Ascending aorta (tissue), 2 donors: ENCODE measurements at regions of chr1 and their contacts with region 1.

Region 1: DNA sequence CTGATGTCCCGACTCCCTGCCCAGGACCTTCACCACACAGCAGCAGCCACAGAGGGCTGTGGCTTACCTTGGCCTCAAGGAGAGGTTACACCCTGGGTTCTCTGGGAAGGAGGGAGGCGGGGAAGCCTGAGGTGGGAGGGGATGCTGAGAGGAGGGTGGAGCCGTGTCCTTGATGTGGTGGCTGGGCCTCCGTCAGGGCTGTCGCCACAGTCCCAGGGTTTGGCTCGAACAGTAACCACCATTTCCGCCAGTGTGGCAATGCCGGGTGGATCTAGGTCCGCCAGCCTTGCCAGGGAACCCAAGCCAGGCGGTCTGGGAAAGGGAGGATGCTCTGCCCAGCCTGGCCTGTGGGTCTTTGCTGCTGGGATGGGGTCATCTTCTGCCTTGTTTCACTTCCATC is 18.4 kb upstream of the CDCA8 start:
- DNase-seq: no peak
- H3K4me3 ChIP-seq: no peak overlapping the region
- H3K27ac ChIP-seq: no peak overlapping the region
- H3K4me1 ChIP-seq: no peaks in the 10 kb centered on the region
- H3K27me3 ChIP-seq: no peaks in the 10 kb centered on the region
- CTCF ChIP-seq: no peak

Region 2: DNA sequence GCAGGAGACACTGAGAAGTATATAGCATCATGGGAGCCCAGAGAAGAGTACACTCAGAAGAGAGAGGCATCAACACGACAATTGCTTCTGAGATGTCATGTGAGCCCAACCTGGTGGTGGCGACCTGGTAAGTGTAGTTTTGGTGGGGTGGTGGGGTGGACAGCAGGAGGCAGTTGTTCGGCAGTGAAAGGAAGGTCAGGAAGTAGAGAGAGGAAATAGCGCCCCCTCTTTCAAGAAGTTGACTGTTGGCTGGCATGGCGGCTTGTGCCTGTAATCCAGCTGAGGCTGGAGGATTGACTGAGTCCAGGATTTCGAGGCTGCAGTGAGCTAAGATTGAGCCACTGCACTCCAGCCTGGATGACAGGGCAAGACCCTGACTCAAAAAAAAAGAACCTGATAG is 51.8 kb before region 1 on chr1:
- intact Hi-C with region 1: no loop called
- DNase-seq: no peak
- H3K4me3 ChIP-seq: no peak overlapping the region
- H3K27ac ChIP-seq: no peak overlapping the region
- H3K4me1 ChIP-seq: no peaks in the 10 kb centered on the region
- H3K27me3 ChIP-seq: no peaks in the 10 kb centered on the region
- CTCF ChIP-seq: no peak

Region 3: GRCh38 chr1:37634244-37634991 is 39.5 kb before region 1 on chr1 and contains the start of gene RSPO1:
- intact Hi-C with region 1: loop called (anchors 5 kb)
- DNase-seq: no peak
- H3K4me3 ChIP-seq: peak within 1 kb of the TSS in 1 of 2 donors; percentile 52
- H3K27ac ChIP-seq: no peak within 1 kb of the TSS
- H3K4me1 ChIP-seq: peaks cover 0 to 8% of the 10 kb centered on the region in 2 donors
- H3K27me3 ChIP-seq: peaks cover 8% of the 10 kb centered on the region
- CTCF ChIP-seq: no peak
- total RNA-seq, gene RSPO1: not detected